ENCODE measurements at regions of chr17 and their contacts with region 1.

Region 1: DNA sequence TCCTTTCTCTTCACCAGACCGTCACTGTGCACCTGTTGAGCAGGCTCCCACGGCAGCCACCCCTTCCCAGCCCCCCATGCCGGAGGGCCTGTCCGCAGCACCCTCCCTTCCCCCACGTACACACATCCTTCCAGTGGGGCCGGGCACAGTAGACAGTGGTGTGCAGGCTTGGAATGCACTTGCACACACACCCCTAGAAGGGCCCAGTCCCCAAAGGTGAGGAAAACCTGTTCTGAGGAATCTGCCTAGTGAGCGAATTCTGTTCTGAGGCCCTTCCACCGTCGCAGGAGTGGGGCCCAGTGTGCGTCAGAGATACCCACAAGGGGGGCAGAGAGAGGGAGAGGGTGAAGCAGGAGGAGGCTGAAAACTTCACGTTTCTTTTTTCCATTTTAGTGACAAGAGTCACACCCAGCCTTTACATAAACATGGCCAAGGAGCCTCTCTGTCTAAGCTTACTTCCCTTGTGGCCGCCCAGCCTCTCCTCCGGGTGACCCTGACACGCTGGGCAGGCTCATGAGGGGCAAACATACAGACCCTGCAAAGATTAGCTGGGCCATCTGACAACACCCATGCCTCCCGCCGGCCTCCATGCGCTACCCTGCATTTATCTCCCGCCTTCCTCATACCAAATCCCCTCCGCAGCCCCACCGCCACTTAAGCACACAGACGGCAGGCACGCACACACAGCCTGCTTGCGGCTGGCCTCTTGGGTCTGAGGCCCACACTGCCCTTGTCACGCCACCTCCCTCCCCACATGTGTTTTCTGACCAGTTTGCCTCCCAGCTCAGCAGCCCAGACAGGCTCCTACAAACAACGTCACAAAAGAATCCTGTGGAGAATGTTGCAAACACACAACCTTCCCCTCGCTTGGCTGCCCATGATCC is 1.8 kb downstream of the ZBTB4 start:
- DNase-seq: peak; percentile 95
- ATAC-seq: peak; percentile 60
- H3K4me3 ChIP-seq: peak overlapping the region; percentile 76
- H3K27ac ChIP-seq: peak overlapping the region; percentile 91
- H3K4me1 ChIP-seq: peaks cover 23% of the 10 kb centered on the region
- H3K27me3 ChIP-seq: no peaks in the 10 kb centered on the region
- CTCF ChIP-seq: no peak
- POLR2A ChIP-seq: peak; percentile 71; the same call in 1 of the 2 replicates
- RAD21 ChIP-seq: no peak; the same call in 1 of the 2 replicates

Region 2: GRCh38 chr17:6969323-6969726 is 508.3 kb before region 1 on chr17:
- CTCF ChIA-PET with region 1: no interaction called
- POLR2A ChIA-PET with region 1: no interaction called
- dilution Hi-C with region 1: no loop called
- in situ Hi-C with region 1: no loop called
- intact Hi-C with region 1: no loop called
- DNase-seq: no peak
- ATAC-seq: no peak
- H3K4me3 ChIP-seq: no peak overlapping the region
- H3K27ac ChIP-seq: no peak overlapping the region
- H3K4me1 ChIP-seq: no peaks in the 10 kb centered on the region
- H3K27me3 ChIP-seq: no peaks in the 10 kb centered on the region; the same call in 1 of the 2 replicates
- CTCF ChIP-seq: no peak
- POLR2A ChIP-seq: no peak
- RAD21 ChIP-seq: no peak

Region 3: DNA sequence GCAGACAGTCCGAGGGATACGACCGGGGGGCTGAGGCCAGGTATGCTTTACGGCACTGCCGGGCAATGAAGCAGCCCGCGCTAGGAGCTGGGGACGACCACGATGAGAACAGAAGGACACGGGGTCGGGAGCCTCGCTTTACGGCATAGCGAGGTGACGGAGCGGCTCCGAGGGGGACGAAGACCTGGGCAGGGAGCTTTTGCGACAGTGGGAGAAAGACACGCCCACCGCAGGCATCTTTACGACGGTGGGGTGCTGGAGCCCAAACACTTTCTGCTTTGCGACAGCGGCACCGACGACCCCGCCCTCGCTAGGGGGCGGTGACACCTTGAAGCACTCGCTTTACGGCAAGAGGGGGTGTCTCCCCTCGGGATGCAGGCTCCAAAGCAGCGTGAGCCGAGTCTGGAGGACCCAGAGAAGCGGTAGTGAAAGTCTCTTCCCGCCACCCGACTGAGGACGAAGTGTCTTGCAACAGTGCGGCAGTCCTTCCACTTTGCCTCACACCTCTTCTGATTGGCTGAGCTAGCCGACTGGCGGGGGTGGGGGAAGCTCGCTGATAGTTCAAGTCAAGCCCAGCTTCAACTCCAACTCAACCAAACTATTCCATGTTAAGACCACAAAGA is 148.1 kb before region 1 on chr17:
- CTCF ChIA-PET with region 1: no interaction called
- POLR2A ChIA-PET with region 1: no interaction called
- dilution Hi-C with region 1: no loop called
- in situ Hi-C with region 1: no loop called
- intact Hi-C with region 1: no loop called
- DNase-seq: peak; percentile 99
- ATAC-seq: peak; percentile 83
- H3K4me3 ChIP-seq: peak overlapping the region; percentile 86
- H3K27ac ChIP-seq: peak overlapping the region; percentile 79
- H3K4me1 ChIP-seq: peaks cover 5% of the 10 kb centered on the region; the same call in 1 of the 2 replicates
- H3K27me3 ChIP-seq: peaks cover 2% of the 10 kb centered on the region
- CTCF ChIP-seq: no peak
- POLR2A ChIP-seq: no peak
- RAD21 ChIP-seq: no peak

Region 4: GRCh38 chr17:7435221-7435675 is 42.4 kb before region 1 on chr17 and contains the start of gene TMEM102:
- CTCF ChIA-PET with region 1: interaction called, 10 read pairs
- POLR2A ChIA-PET with region 1: no interaction called
- dilution Hi-C with region 1: no loop called
- in situ Hi-C with region 1: no loop called
- intact Hi-C with region 1: loop called (anchors 1 kb)
- DNase-seq: peak; percentile 94
- ATAC-seq: peak; percentile 77
- H3K4me3 ChIP-seq: peak within 1 kb of the TSS; percentile 33
- H3K27ac ChIP-seq: no peak within 1 kb of the TSS
- H3K4me1 ChIP-seq: peaks cover 2% of the 10 kb centered on the region
- H3K27me3 ChIP-seq: peaks cover 25% of the 10 kb centered on the region
- CTCF ChIP-seq: no peak
- POLR2A ChIP-seq: no peak
- RAD21 ChIP-seq: no peak
- total RNA-seq, gene TMEM102: 1.1 and 1.4 TPM in 2 replicates

Measured in IMR-90 (cell line).